Heart right ventricle (tissue), 16 donors: ENCODE measurements at regions of chr11 and their contacts with region 1.

Region 1: GRCh38 chr11:55673860-55674259 is 11.9 kb downstream of the OR4C6 start:
- DNase-seq: no peak
- ATAC-seq: no peak
- H3K4me3 ChIP-seq: no peak overlapping the region
- H3K27ac ChIP-seq: no peak overlapping the region
- H3K4me1 ChIP-seq: no peaks in the 10 kb centered on the region
- H3K27me3 ChIP-seq: no peaks in the 10 kb centered on the region
- CTCF ChIP-seq: no peak

Region 2: GRCh38 chr11:55658031-55658573 is 15.8 kb before region 1 on chr11:
- intact Hi-C with region 1: no loop called
- DNase-seq: no peak
- ATAC-seq: no peak
- H3K4me3 ChIP-seq: no peak overlapping the region
- H3K27ac ChIP-seq: no peak overlapping the region
- H3K4me1 ChIP-seq: no peaks in the 10 kb centered on the region
- H3K27me3 ChIP-seq: no peaks in the 10 kb centered on the region
- CTCF ChIP-seq: no peak

Region 3: GRCh38 chr11:55732936-55733335 is 59.1 kb after region 1 on chr11:
- intact Hi-C with region 1: loop called in 1 of 10 experiments (anchors 10 kb)
- DNase-seq: no peak
- ATAC-seq: no peak
- H3K4me3 ChIP-seq: no peak overlapping the region
- H3K27ac ChIP-seq: no peak overlapping the region
- H3K4me1 ChIP-seq: no peaks in the 10 kb centered on the region
- H3K27me3 ChIP-seq: no peaks in the 10 kb centered on the region
- CTCF ChIP-seq: no peak